ENCODE measurements at regions of chr5 and their contacts with region 1.

Region 1: DNA sequence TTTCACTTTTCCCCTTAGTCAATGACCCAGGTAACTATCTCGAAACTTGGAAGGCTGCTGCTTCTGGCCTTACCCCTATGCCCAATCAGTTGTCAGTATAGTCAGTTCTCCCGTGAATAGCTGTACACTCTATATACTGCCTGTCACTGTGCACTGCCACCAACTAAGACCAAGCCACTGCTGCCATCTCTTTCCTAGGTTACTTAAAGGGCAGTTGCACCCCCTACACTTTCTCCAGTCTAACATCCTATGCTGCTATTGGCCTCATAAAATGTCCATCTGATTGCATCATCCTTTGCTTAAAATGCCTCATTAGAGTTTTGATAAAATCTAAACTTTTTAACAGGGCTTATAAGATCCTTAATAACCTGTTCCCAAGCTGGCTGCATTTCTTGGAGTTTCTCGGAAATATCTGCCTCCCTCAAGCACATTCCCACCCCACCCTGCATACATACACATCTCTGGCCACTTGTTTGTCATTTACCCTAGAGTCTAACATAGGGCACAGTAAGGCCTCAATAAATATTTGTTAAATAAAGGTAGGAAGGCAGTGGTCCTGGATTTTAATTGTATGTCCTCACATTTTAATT is 32.8 kb upstream of the TNFAIP8 start:
- DNase-seq: no peak
- H3K4me3 ChIP-seq: no peak overlapping the region
- CTCF ChIP-seq: no peak
- POLR2A ChIP-seq: no peak

Region 2: DNA sequence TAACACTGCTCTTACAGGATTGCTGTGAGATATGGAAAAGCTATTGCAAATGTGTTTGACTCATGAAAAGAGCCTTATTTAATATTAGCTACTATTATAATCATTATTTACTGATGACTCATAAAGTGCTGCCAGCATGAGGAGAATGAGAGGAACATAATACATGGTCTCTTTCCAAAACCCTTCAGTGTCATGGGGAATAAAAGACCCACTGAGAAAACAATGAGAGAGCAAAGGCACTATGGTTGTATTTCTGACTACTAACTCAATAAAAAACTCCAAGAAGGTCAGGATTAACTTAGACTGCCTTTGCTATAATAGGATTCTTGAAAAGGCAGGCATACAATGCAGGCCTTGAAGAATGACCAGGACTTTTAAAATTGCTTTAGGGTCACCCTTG is 968.2 kb before region 1 on chr5:
- intact Hi-C with region 1: loop called (anchors 5 kb)
- DNase-seq: no peak
- H3K4me3 ChIP-seq: no peak overlapping the region
- CTCF ChIP-seq: no peak
- POLR2A ChIP-seq: no peak

Measured in lower leg skin (tissue), 4 donors.